ENCODE measurements at regions of chr3 and their contacts with region 1.

Region 1: DNA sequence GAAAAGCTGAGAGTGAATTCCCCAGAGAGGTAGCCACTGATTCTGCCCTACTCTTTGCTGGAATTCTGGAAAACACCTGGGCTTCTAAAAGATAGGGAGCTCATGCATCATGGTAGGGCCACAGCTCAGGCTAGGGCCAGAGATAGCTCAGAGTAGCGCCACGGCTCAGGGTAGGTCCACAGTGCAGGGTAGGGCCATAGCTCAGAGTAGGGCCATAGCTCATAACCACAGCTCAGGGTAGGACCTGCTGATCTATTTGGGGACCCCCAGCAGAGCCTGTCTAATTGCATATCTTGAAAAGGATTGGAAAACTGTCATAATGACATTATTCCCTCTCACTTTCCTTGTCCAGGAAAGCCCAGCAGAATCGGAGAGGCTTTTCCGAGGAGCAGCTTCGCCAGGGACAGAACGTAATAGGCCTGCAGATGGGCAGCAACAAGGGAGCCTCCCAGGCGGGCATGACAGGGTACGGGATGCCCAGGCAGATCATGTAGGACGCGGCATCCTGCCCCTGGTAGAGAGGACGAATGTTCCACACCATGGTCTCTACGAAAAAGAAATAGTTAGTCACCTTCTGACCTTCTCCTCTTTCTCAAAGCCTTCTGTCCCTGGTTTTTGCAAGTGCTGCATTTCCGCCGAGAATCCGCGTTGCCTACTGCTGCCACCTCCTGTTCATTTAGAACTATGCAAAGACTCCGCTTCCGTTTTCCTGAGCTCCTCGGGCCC is 14.5 kb downstream of the TAGLN3 start:
- DNase-seq: peak; percentile 74
- ATAC-seq: peak; percentile 88
- H3K4me3 Mint-ChIP-seq: no peak overlapping the region
- H3K27ac Mint-ChIP-seq: peak overlapping the region; percentile 53
- H3K4me1 Mint-ChIP-seq: peaks cover 13% of the 10 kb centered on the region
- H3K27me3 Mint-ChIP-seq: no peaks in the 10 kb centered on the region

Region 2: GRCh38 chr3:111717601-111718000 is 295.6 kb before region 1 on chr3:
- CTCF ChIA-PET with region 1: interaction called, 57 read pairs
- POLR2A ChIA-PET with region 1: no interaction called
- DNase-seq: peak; percentile 79
- ATAC-seq: peak; percentile 91
- H3K4me3 Mint-ChIP-seq: no peak overlapping the region
- H3K27ac Mint-ChIP-seq: peak overlapping the region; percentile 27
- H3K4me1 Mint-ChIP-seq: peaks cover 6% of the 10 kb centered on the region
- H3K27me3 Mint-ChIP-seq: no peaks in the 10 kb centered on the region

Region 3: GRCh38 chr3:111895079-111895478 is 118.1 kb before region 1 on chr3:
- CTCF ChIA-PET with region 1: interaction called, 12 read pairs
- POLR2A ChIA-PET with region 1: interaction called, 3 read pairs
- DNase-seq: no peak
- ATAC-seq: no peak
- H3K4me3 Mint-ChIP-seq: no peak overlapping the region
- H3K27ac Mint-ChIP-seq: no peak overlapping the region
- H3K4me1 Mint-ChIP-seq: peaks cover 6% of the 10 kb centered on the region
- H3K27me3 Mint-ChIP-seq: no peaks in the 10 kb centered on the region

Region 4: GRCh38 chr3:111978493-111979433 is 34.5 kb before region 1 on chr3 and contains the start of gene ABHD10:
- CTCF ChIA-PET with region 1: interaction called, 48 read pairs
- POLR2A ChIA-PET with region 1: interaction called, 9 read pairs
- DNase-seq: peak; percentile 98
- ATAC-seq: peak; percentile 98
- H3K4me3 Mint-ChIP-seq: peak within 1 kb of the TSS; percentile 91
- H3K27ac Mint-ChIP-seq: peak within 1 kb of the TSS; percentile 95
- H3K4me1 Mint-ChIP-seq: peaks cover 28% of the 10 kb centered on the region
- H3K27me3 Mint-ChIP-seq: peaks cover 6% of the 10 kb centered on the region
- total RNA-seq, gene ABHD10: 36.3 to 43.7 TPM

Region 5: GRCh38 chr3:112032098-112032731 is 19.0 kb after region 1 on chr3:
- CTCF ChIA-PET with region 1: interaction called, 11 read pairs
- POLR2A ChIA-PET with region 1: no interaction called
- DNase-seq: no peak
- ATAC-seq: no peak
- H3K4me3 Mint-ChIP-seq: no peak overlapping the region
- H3K27ac Mint-ChIP-seq: no peak overlapping the region
- H3K4me1 Mint-ChIP-seq: no peaks in the 10 kb centered on the region
- H3K27me3 Mint-ChIP-seq: no peaks in the 10 kb centered on the region

Region 6: DNA sequence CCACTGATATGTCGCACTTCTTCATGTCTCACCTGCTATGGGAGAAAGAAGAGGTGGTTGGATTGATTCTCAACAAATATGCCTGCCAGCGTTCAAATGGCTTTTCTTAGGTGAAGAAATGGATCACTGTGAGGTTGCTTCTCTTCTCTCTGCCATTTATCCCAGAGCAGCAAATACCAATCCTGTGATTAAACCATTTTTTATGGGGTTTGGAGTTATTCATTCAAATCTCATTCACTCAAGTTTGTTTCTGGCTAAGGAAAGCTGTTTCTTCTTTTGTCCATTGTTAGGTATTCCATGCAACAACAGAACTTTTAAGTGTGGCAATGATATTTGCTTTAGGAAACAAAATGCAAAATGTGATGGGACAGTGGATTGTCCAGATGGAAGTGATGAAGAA is 60.8 kb after region 1 on chr3:
- CTCF ChIA-PET with region 1: no interaction called
- POLR2A ChIA-PET with region 1: no interaction called
- DNase-seq: no peak
- ATAC-seq: no peak
- H3K4me3 Mint-ChIP-seq: no peak overlapping the region
- H3K27ac Mint-ChIP-seq: no peak overlapping the region
- H3K4me1 Mint-ChIP-seq: peaks cover 42% of the 10 kb centered on the region
- H3K27me3 Mint-ChIP-seq: peaks cover 7% of the 10 kb centered on the region